ENCODE measurements at regions of chr12 and their contacts with region 1.

Region 1: DNA sequence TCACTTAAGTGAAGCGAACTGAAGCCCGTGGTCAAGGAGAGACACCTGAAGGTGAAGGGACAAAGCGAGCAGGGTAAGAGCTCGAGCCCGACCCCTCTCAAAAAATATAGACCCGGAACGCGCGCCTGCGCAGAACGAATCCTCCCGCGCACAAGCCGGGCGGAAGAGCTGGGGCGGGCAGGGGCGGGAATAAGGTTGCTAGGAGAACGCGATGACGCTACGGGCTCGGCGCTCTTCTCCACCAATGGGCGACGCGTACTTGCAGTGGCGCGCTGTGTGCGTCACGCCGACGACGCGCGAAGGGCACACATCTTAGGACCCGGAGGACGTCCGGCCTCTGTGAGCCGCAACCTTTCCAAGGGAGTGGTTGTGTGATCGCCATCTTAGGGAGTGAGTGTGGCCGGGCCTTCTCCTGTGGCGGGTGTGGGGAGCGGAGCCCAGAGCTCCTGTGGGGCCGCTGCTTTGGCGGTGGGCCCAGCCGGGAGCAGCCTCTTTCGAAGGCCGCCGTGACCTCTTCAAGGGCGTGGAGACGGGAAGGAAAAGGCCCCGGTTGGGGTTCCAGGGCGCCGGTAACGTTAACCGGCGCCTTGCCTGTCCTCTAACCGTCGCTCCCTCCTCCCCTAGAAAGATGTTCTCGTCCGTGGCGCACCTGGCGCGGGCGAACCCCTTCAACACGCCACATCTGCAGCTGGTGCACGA is at the start of gene SLC25A3:
- DNase-seq: peak; percentile 95
- H3K4me3 Mint-ChIP-seq: peak within 1 kb of the TSS; percentile 86
- H3K27ac Mint-ChIP-seq: peak within 1 kb of the TSS; percentile 97
- H3K4me1 Mint-ChIP-seq: peaks cover 34% of the 10 kb centered on the region
- H3K27me3 Mint-ChIP-seq: no peaks in the 10 kb centered on the region
- total RNA-seq, gene SLC25A3: 355 to 365 TPM

Region 2: DNA sequence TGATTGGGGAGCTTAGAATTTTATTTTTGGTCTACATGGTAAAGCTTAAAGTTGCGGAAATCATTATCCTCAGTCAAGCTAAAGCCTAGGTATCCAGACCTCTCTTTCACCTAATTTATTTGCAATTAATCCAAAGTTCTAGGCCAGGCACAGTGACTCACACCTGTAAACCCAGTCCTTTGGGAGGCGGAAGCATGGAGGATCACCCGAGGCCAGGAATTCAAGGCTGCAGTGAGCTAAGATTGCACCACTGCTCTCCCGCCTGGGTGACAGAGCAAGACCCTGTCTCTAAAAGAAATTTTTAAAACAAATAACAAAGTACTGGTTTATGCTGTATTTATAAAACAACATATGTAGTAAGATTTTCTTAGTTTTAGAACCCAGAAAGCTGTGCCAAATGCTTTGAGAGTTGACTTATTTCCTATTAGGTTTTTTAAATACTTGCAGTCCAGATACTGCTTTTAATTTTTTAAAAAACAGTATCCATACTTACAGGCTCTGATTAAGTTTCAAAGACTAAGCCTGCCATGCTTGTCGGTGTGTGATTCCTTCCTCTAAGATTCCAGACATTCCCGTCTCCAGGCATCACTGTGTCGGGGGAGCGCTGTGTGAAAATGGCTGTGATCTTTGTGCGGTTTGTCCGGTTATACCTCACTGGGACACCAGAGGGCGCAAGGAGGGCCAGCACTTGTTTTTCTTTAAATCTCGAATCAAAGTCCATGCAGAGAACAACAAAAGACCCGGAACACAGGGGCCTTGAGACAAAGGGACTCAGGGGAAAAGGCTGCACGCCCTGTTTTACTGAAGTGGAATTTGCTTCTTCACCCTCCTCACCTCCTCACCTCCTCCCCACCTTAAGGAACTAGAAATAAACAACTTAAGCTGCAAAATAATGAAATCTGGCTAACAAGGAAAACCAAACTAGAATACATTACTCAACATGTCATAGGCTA is 102.7 kb before region 1 on chr12:
- CTCF ChIA-PET with region 1: interaction called, 6 read pairs
- POLR2A ChIA-PET with region 1: interaction called, 12 read pairs
- DNase-seq: peak; percentile 84
- H3K4me3 Mint-ChIP-seq: peak overlapping the region; percentile 12
- H3K27ac Mint-ChIP-seq: peak overlapping the region; percentile 78
- H3K4me1 Mint-ChIP-seq: peaks cover 6% of the 10 kb centered on the region
- H3K27me3 Mint-ChIP-seq: peaks cover 9% of the 10 kb centered on the region

Region 3: GRCh38 chr12:98532681-98533304 is 60.7 kb before region 1 on chr12:
- CTCF ChIA-PET with region 1: interaction called, 13 read pairs
- POLR2A ChIA-PET with region 1: interaction called, 11 read pairs
- DNase-seq: no peak
- H3K4me3 Mint-ChIP-seq: no peak overlapping the region
- H3K27ac Mint-ChIP-seq: peak overlapping the region; percentile 31
- H3K4me1 Mint-ChIP-seq: peaks cover 40% of the 10 kb centered on the region
- H3K27me3 Mint-ChIP-seq: no peaks in the 10 kb centered on the region

Region 4: DNA sequence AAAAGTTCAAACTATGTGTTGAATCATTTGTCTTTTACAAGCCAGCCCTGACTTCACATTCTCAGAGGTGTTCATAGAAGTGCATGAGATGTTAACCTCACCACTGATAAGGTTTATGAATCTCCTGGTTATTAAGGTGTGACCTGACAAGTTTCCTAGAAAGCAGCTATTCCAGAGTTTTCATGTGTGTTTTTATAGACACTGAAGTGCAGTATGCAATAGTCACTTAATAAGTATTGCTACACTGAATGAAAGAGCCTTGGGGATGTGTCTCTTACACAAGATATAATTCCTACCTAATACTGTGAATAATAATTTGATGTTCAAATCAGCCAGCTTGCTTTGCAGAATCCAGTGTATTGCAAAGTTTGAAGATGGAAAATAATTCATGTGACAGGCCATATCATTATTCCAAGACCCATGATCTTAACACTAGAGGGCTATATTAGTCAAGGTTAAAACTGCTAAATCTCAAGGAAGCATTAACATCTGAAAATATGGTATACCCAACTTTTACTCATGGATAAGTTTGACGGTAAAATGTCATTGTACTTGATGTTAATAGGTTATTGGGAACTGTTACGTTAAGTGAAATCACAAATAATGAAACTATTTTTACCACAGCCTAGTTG is 13.0 kb after region 1 on chr12:
- CTCF ChIA-PET with region 1: interaction called, 3 read pairs
- POLR2A ChIA-PET with region 1: interaction called, 40 read pairs
- DNase-seq: no peak
- H3K4me3 Mint-ChIP-seq: no peak overlapping the region
- H3K27ac Mint-ChIP-seq: no peak overlapping the region
- H3K4me1 Mint-ChIP-seq: peaks cover 2% of the 10 kb centered on the region
- H3K27me3 Mint-ChIP-seq: no peaks in the 10 kb centered on the region

Region 5: DNA sequence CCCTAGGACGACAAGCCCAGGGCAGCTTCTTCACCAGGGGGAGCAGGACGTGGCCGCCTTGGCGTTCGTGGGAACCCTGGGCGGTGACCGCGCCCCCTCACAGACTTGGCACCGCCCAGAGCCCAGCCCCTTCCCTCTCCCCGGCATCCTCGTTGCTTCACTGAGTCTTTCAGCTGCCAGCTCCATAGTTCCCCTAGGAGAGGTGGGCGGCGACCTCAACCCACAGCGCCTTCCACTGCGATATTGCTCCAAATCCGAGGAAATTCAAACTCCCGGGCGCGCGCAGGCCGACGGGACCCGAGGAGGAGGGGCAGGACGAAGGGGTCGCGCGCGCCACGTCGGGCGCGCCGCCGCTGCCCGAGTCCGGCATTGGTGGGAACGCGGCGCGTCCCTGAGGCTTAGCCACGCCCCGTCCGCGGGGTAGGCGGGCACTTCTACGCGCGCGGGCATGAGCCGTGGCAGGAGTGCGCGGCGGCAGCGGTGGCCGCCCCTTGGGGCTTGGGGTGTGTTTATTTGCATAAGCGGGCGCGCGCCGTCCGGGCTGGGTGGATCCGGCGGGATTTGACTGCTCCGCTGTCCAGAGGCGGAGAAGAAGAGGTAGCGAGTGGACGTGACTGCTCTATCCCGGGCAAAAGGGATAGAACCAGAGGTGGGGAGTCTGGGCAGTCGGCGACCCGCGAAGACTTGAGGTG is 51.4 kb after region 1 on chr12 and contains the starts of genes APAF1 and IKBIP:
- CTCF ChIA-PET with region 1: interaction called, 6 read pairs
- POLR2A ChIA-PET with region 1: interaction called, 142 read pairs
- DNase-seq: peak; percentile 98
- H3K4me3 Mint-ChIP-seq: peak within 1 kb of the TSS; percentile 96
- H3K27ac Mint-ChIP-seq: peak within 1 kb of the TSS; percentile 95
- H3K4me1 Mint-ChIP-seq: peaks cover 46% of the 10 kb centered on the region
- H3K27me3 Mint-ChIP-seq: no peaks in the 10 kb centered on the region
- total RNA-seq, gene APAF1: 37.4 to 37.8 TPM
- total RNA-seq, gene IKBIP: 25.5 to 26.2 TPM

Measured in activated CD4-positive, alpha-beta memory T cell treated with anti-CD3 and anti-CD28 coated beads, Interleukin-2, amount 10 ng/mL, durations not matched to agents 7 days and 5 days (primary cell).